Mammary epithelial cell (primary cell): ENCODE measurements at regions of chr1 and their contacts with region 1.

Region 1: GRCh38 chr1:55277377-55278130 is 62.4 kb upstream of the USP24 start:
- DNase-seq: peak; percentile 75
- H3K4me3 ChIP-seq: no peak overlapping the region
- H3K27ac ChIP-seq: no peak overlapping the region
- H3K4me1 ChIP-seq: peaks cover 26% of the 10 kb centered on the region
- H3K27me3 ChIP-seq: no peaks in the 10 kb centered on the region
- CTCF ChIP-seq: peak; percentile 79 to 88

Region 2: GRCh38 chr1:55071477-55071876 is 206.1 kb before region 1 on chr1:
- CTCF ChIA-PET with region 1: no interaction called
- dilution Hi-C with region 1: no loop called
- in situ Hi-C with region 1: no loop called
- intact Hi-C with region 1: loop called (anchors 1 kb)
- DNase-seq: peak; percentile 46
- H3K4me3 ChIP-seq: no peak overlapping the region
- H3K27ac ChIP-seq: no peak overlapping the region
- H3K4me1 ChIP-seq: no peaks in the 10 kb centered on the region
- H3K27me3 ChIP-seq: no peaks in the 10 kb centered on the region
- CTCF ChIP-seq: peak; percentile 27 to 44

Region 3: DNA sequence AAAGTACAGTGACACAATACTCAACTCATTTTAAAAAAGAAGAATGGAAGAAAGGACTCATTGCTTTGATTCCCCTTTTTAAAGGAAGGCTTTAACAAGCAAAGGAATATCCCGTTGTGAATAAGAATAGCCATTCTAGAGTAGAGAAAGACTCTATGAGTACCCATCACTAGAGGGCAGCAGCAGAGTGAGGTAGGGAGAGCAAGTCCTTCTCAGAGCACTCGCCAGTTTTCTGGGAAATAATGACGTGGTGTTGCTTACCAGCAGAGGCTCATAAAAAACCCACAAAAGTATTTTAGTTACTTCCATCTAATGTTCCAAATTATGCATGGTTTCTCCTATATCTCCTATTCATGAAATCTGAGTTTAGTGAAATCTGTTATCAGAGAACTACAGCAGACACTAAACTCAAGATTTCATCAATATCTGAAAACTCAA is 137.0 kb before region 1 on chr1:
- CTCF ChIA-PET with region 1: interaction called, 3 read pairs
- dilution Hi-C with region 1: no loop called
- in situ Hi-C with region 1: loop called (anchors 5 kb)
- intact Hi-C with region 1: loop called (anchors 1 kb)
- DNase-seq: peak; percentile 72
- H3K4me3 ChIP-seq: no peak overlapping the region
- H3K27ac ChIP-seq: no peak overlapping the region
- H3K4me1 ChIP-seq: no peaks in the 10 kb centered on the region
- H3K27me3 ChIP-seq: no peaks in the 10 kb centered on the region
- CTCF ChIP-seq: peak; percentile 77 to 89

Region 4: DNA sequence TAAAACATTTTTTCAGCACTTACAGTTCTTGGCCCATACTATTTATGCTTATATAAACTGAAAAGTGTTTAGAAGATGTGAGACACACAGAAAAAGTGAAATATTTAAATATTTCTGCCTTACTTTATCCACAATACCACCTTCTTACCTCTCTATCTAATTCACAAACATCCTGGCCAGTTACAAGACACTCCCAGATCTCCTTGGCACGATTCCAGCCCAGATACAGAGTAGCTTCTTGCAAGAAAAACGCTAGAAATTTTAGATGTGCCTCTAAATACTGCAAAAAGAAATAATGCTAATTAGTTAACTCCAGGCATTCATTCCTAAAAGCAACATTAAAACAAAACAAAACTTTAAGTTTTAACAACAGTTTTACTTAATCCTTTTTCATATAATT is 130.8 kb before region 1 on chr1:
- CTCF ChIA-PET with region 1: no interaction called
- dilution Hi-C with region 1: no loop called
- in situ Hi-C with region 1: loop called (anchors 5 kb)
- intact Hi-C with region 1: no loop called
- DNase-seq: no peak
- H3K4me3 ChIP-seq: no peak overlapping the region
- H3K27ac ChIP-seq: no peak overlapping the region
- H3K4me1 ChIP-seq: no peaks in the 10 kb centered on the region
- H3K27me3 ChIP-seq: no peaks in the 10 kb centered on the region
- CTCF ChIP-seq: no peak

Region 5: DNA sequence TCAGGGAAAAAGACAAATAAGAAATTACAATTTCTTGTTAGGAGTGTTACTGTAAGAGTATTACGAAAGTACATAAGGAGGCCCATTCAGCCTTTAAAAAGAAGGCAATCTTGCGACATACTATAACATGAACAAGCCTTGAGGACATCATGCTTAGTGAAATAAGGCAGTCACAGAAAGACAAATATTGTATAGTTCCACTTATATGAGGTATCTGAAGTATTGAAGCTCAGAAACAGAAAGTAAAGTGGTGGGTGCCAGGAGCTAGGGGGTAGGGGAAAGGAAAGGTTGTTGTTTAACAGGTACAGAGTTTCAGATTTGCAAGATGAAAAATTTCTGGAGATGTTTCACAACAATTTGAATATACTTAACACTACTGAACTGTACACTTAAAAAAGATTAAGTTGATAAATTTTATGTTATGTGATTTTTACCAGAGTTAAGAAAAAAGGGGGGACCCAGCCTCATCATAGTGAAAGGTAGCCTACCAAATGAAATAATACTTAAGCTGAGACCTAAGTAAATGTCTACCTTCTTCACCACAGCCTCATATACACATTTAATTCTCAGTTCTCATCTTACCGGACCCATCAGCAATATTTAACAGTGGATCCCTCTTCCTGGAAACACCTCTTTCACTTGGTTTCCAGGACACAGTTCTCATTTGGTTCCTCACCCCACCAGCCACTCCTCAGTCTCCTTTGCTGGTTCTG is 81.9 kb before region 1 on chr1:
- CTCF ChIA-PET with region 1: no interaction called
- dilution Hi-C with region 1: no loop called
- in situ Hi-C with region 1: no loop called
- intact Hi-C with region 1: no loop called
- DNase-seq: peak; percentile 42
- H3K4me3 ChIP-seq: no peak overlapping the region
- H3K27ac ChIP-seq: no peak overlapping the region
- H3K4me1 ChIP-seq: no peaks in the 10 kb centered on the region
- H3K27me3 ChIP-seq: no peaks in the 10 kb centered on the region
- CTCF ChIP-seq: no peak

Region 6: DNA sequence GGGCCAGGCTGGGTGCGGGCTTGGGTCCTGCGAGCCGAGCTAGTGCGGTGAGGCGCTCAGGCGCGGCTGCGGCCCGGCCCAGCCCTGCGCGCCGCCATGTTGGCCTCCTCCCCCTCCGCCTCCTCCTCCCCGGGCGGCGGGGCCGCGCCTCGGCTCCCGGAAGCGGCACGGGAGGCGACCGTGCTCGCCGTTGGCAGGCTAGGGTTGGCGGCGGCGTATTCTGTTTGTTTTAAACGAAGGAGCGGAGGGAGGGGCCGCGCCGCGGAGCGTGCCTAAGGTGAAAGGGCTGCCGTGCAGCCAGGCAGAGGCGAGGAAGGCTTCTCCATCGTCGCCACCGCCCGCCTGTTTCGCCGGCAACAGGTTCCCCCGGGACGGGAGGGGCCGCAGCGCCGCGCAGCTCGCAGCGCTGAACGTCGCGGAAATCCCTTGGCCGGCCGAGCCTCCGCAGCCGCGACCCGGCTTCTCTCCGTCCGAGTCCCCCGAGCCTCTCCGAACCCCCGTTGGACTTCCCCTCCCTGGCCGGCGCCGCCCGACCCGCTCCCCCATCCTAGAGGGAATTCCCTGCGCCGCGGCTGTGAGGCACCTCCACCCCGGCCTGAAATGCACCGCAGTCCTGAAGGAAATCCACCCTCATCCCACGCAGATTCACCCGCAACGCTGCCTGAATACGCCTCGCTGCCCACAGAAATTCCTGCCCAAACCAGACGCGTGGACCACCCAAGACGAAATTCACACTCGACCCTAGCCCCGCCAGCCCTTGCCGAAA is 62.1 kb before region 1 on chr1 and contains the start of gene USP24:
- CTCF ChIA-PET with region 1: no interaction called
- dilution Hi-C with region 1: no loop called
- in situ Hi-C with region 1: no loop called
- intact Hi-C with region 1: loop called (anchors 1 kb)
- DNase-seq: peak; percentile 76
- H3K4me3 ChIP-seq: peak within 1 kb of the TSS; percentile 64 to 97 (median 96)
- H3K27ac ChIP-seq: peak within 1 kb of the TSS; percentile 75
- H3K4me1 ChIP-seq: peaks cover 24% of the 10 kb centered on the region
- H3K27me3 ChIP-seq: no peaks in the 10 kb centered on the region
- CTCF ChIP-seq: no peak
- total RNA-seq, gene USP24: 37.7 to 41.6 TPM